ENCODE measurements at regions of chr1 and their contacts with region 1.

Region 1: GRCh38 chr1:149927503-149928387 is at the start of gene SF3B4:
- DNase-seq: peak; percentile 98
- H3K4me3 Mint-ChIP-seq: peak within 1 kb of the TSS; percentile 99
- H3K27ac Mint-ChIP-seq: peak within 1 kb of the TSS; percentile 87
- H3K4me1 Mint-ChIP-seq: peaks cover 71% of the 10 kb centered on the region
- H3K27me3 Mint-ChIP-seq: no peaks in the 10 kb centered on the region
- CTCF ChIP-seq: no peak
- total RNA-seq, gene SF3B4: 79.2 and 99.2 TPM in 2 replicates

Region 2: DNA sequence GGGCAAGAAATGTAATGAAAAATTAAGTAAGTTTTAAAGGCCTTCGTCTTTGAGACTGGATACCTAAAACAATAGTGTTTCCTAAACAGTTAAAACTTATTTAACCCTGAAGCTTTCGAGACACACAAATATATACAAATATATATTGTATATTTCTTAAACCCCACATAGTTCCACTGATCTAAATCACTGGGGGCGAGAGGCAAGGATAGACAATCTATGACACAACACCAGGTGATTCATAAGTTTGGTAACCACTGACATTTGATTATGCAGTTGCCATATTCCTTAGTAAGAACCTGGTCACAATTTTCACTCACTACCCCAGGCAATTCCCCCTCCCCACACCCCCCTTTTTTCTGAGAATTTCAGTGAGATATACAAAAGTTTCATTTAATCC is 83.6 kb before region 1 on chr1:
- CTCF ChIA-PET with region 1: no interaction called
- POLR2A ChIA-PET with region 1: interaction called, 12 read pairs
- intact Hi-C with region 1: no loop called
- DNase-seq: peak; percentile 80
- H3K4me3 Mint-ChIP-seq: peak overlapping the region; percentile 93
- H3K27ac Mint-ChIP-seq: peak overlapping the region; percentile 65
- H3K4me1 Mint-ChIP-seq: peaks cover 52% of the 10 kb centered on the region
- H3K27me3 Mint-ChIP-seq: no peaks in the 10 kb centered on the region
- CTCF ChIP-seq: no peak

Region 3: GRCh38 chr1:149849947-149850360 is 77.8 kb before region 1 on chr1:
- CTCF ChIA-PET with region 1: no interaction called
- POLR2A ChIA-PET with region 1: interaction called, 12 read pairs
- intact Hi-C with region 1: no loop called
- DNase-seq: peak; percentile 25
- H3K4me3 Mint-ChIP-seq: peak overlapping the region; percentile 74
- H3K27ac Mint-ChIP-seq: peak overlapping the region; percentile 70
- H3K4me1 Mint-ChIP-seq: peaks cover 50% of the 10 kb centered on the region
- H3K27me3 Mint-ChIP-seq: no peaks in the 10 kb centered on the region
- CTCF ChIP-seq: no peak

Region 4: DNA sequence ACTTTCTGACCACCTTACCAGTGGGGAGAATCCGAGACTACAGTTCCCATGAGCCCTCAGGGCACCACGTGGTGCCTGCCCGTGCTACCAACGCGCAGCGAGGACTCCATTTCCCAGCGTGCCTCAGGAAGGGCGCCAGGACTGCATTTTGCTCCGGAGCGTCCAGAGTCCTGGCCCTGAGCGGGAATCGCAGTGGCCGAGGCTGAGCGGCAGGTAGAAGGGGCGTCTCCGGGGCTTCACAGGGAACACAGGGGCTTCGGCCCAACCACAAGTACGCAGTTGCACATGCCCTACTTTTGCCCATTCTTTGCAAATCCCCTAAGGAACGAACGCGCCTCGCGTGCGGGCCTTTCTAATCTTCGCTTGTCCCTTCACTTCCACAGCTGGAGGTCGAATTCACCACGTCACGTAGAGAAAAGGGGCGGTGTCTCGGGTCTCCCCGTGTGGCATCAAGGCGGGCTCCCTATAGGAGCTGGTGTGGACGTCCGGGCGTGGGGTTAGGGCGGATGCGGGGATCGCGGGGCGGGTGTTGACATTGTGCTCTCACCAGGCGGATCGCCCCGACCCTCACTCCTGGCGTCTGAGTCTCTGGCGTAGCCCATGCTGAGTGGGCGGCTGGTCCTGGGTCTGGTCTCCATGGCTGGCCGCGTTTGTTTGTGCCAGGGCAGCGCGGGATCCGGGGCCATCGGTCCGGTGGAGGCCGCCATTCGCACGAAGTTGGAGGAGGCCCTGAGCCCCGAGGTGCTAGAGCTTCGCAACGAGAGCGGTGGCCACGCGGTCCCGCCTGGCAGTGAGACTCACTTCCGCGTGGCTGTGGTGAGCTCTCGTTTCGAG is 28.1 kb before region 1 on chr1 and contains the start of gene BOLA1:
- CTCF ChIA-PET with region 1: interaction called, 4 read pairs
- POLR2A ChIA-PET with region 1: interaction called, 13 read pairs
- intact Hi-C with region 1: no loop called
- DNase-seq: peak; percentile 97
- H3K4me3 Mint-ChIP-seq: peak within 1 kb of the TSS; percentile 80
- H3K27ac Mint-ChIP-seq: peak within 1 kb of the TSS; percentile 12
- H3K4me1 Mint-ChIP-seq: peaks cover 16% of the 10 kb centered on the region
- H3K27me3 Mint-ChIP-seq: no peaks in the 10 kb centered on the region
- CTCF ChIP-seq: no peak
- total RNA-seq, gene BOLA1: 17.4 and 22.4 TPM in 2 replicates

Region 5: DNA sequence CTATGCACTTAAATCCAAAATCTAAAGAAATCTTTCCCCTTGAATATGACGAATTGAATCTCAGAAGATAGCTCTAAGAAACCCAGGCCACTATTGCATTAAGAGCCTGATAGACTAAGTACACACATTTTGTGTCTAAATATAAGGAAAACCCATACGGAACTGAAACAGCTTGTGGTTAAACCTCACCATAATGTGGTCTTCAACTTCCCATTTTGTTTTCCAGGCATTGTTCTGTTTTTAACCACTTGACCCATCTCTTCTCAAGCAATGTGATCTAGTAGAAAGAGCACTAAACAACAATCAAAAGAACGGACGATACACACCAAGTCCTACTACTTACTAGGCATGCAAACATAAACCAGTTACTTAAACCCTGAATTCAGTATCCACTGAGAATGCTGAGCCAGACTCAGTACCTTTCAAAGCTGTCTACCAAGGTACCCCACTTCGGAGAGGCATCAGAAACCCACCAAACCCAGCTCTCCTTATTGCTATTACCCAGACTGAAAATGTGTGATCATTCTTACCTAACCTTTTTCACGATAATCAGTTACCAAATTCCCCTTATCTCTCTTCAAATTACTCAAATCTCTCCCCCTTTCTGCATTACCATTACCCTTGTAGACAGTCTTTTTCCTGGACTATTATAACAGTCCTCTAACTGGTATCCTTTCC is 70.0 kb after region 1 on chr1:
- CTCF ChIA-PET with region 1: no interaction called
- POLR2A ChIA-PET with region 1: interaction called, 10 read pairs
- intact Hi-C with region 1: no loop called
- DNase-seq: no peak
- H3K4me3 Mint-ChIP-seq: no peak overlapping the region
- H3K27ac Mint-ChIP-seq: no peak overlapping the region
- H3K4me1 Mint-ChIP-seq: peaks cover 43% of the 10 kb centered on the region
- H3K27me3 Mint-ChIP-seq: no peaks in the 10 kb centered on the region
- CTCF ChIP-seq: no peak

Measured in MCF 10A (cell line).